Endothelial cell of umbilical vein (primary cell): ENCODE measurements at regions of chr7 and their contacts with region 1.

Region 1: DNA sequence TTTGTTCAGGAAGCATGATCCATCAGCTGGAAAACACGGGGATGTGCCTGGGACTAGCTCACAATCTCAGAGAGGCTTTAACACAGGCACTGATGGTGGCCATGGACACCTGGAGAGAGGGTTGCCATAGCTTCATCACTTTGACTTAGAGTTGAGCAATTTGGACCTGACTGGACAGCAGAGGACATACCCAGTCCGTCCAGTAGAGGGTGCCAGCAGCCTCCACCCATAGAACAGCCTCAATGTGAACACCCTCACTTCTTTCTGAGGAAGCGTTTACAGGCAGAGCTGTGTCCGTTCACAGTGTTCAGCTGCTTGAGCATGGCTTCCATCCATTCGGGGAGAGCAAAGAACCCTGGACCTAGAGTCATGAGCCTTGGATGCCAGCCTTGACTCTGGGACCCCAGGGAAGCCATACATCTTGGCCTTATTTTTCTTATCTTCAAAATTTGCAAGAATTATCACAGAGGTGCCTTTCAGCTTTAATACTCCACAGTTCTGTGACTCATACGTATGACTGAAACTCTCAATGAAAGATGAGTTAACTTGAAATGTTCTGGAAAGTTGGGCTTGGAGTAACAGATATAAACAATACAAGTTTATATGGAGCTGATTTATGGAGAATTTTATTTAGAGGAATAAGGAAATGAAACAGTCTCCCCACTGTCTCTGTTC is 302.9 kb upstream of the PODXL start:
- DNase-seq: peak; percentile 82
- H3K4me3 ChIP-seq: no peak overlapping the region
- H3K27ac ChIP-seq: no peak overlapping the region
- H3K4me1 ChIP-seq: peaks cover 17% of the 10 kb centered on the region
- H3K27me3 ChIP-seq: peaks cover 5 to 12% of the 10 kb centered on the region in 2 experiments
- CTCF ChIP-seq: peak; percentile 82 to 92
- POLR2A ChIP-seq: no peak

Region 2: GRCh38 chr7:131869169-131869844 is 10.0 kb after region 1 on chr7:
- CTCF ChIA-PET with region 1: interaction called, 15 read pairs
- POLR2A ChIA-PET with region 1: no interaction called
- dilution Hi-C with region 1: no loop called
- intact Hi-C with region 1: no loop called
- DNase-seq: no peak
- H3K4me3 ChIP-seq: no peak overlapping the region
- H3K27ac ChIP-seq: no peak overlapping the region
- H3K4me1 ChIP-seq: no peaks in the 10 kb centered on the region
- H3K27me3 ChIP-seq: peaks cover 6 to 10% of the 10 kb centered on the region in 2 experiments
- CTCF ChIP-seq: no peak
- POLR2A ChIP-seq: no peak

Region 3: DNA sequence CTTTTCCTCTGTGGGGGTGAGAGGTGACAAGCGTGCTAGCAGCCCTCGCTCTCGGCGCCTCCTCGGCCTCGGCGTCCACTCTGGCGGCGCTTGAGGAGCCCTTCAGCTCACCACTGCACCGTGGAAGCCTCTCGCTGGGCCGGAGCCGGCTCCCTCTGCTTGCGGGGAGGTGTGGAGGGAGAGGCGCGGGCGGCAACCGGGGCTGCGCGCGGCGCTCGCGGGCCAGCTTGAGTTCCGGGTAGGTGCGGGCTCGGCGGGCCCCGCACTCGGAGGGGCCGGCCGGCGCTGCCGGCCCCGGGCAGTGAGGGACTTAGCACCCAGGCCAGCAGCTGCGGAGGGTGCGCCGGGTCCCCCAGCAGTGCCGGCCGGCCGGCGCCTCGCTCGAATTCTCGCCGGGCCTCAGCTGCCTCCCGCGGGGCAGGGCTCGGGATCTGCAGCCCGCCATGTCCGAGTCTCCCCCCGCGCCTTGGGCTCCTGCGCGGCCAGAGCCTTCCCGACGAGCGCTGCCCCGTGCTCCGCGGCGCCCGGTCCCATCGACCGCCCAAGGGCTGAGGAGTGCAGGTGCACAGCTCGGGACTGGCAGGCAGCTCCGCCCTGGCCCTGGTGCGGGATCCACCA is 50.0 kb after region 1 on chr7:
- CTCF ChIA-PET with region 1: interaction called, 26 read pairs
- POLR2A ChIA-PET with region 1: no interaction called
- dilution Hi-C with region 1: no loop called
- intact Hi-C with region 1: loop called (anchors 1 kb)
- DNase-seq: no peak
- H3K4me3 ChIP-seq: no peak overlapping the region
- H3K27ac ChIP-seq: no peak overlapping the region
- H3K4me1 ChIP-seq: no peaks in the 10 kb centered on the region
- H3K27me3 ChIP-seq: peaks cover 46 to 78% of the 10 kb centered on the region in 2 experiments
- CTCF ChIP-seq: no peak
- POLR2A ChIP-seq: no peak

Region 4: DNA sequence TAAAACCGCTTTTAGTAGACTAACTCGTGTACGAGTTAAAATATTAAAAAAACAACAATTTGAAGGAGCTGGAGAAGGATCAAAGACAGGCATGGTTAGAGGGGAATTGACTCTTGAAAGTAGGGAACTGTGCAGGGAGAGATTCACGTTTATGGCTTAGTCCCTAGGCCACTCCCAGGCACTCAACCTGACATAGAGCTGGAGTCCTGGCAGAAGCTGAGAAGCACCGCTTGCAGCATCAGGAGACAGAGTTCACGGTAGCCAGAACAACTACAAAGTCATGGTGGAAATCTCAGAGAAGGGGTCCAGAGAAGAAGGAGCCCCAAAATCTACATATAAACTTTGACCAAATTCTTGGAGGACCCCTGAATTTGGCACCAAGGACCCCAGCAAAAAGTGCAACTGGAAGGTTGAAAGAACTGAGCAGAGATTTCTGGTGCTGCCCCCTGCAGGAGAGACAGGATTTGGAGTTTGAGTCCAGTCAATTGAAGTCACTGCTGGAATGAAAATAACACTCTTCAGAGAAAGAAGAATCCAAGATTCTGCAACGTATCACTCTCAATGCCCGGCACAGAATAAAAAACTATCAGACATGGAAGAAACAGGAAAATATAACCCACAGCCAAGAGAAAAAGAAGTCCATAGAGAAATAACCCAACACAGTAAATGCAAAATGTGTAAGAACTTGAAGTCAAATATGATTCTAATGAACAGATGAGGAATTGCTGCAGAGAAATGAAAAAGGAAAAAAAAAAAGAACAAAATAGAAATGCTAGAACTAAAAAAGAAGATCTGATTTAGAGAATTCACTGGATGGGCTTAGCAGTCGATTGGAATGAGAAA is 190.4 kb after region 1 on chr7:
- CTCF ChIA-PET with region 1: interaction called, 76 read pairs
- POLR2A ChIA-PET with region 1: no interaction called
- dilution Hi-C with region 1: no loop called
- intact Hi-C with region 1: loop called (anchors 1 kb)
- DNase-seq: peak; percentile 44
- H3K4me3 ChIP-seq: no peak overlapping the region
- H3K27ac ChIP-seq: no peak overlapping the region
- H3K4me1 ChIP-seq: no peaks in the 10 kb centered on the region
- H3K27me3 ChIP-seq: peaks cover 24 to 28% of the 10 kb centered on the region in 2 experiments
- CTCF ChIP-seq: peak; percentile 72 to 75
- POLR2A ChIP-seq: no peak

Region 5: GRCh38 chr7:132250883-132251653 is 391.8 kb after region 1 on chr7:
- CTCF ChIA-PET with region 1: interaction called, 8 read pairs
- POLR2A ChIA-PET with region 1: no interaction called
- dilution Hi-C with region 1: no loop called
- intact Hi-C with region 1: loop called (anchors 5 kb)
- DNase-seq: no peak
- H3K4me3 ChIP-seq: no peak overlapping the region
- H3K27ac ChIP-seq: no peak overlapping the region
- H3K4me1 ChIP-seq: peaks cover 7% of the 10 kb centered on the region
- H3K27me3 ChIP-seq: no peaks in the 10 kb centered on the region
- CTCF ChIP-seq: no peak
- POLR2A ChIP-seq: no peak

Region 6: DNA sequence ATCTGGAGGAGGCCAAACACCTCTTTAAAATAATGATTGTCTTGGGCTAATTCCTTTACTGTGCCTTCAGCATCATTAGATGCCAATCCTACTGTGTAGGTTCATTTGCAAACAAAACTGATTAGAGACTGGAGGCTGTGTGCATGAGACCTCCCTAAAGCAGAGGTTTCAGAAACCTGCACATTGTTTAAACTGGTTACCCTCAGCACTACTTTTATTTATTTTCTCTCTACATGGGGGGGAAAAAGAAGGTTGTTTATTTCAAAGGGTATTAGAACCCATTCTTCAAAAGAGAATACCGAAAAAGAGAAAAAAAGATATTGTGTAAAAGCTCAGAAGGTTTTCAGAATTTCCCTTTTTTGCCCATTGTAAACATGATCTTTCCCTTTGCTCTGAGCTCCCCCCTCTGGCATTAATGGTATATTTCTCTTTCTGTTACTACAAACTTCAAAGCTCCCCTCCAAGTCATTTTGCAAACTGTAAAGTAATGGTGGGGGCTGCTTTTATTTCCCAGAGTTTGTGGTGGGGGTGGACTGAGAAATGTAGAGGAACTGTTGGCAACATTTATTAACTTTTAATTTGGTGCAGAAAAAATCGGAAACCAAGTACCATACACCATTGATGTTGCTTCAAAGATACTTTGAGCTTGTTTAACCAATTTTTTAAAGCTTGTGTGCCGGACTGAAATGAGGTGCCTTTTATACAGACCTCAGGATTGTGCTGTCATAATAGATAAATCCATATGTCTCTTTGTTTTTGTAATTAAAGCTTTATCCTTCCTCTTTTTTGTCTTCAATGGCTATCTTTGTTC is 1575.0 kb after region 1 on chr7:
- CTCF ChIA-PET with region 1: interaction called, 16 read pairs
- POLR2A ChIA-PET with region 1: no interaction called
- dilution Hi-C with region 1: no loop called
- intact Hi-C with region 1: no loop called
- DNase-seq: peak; percentile 65
- H3K4me3 ChIP-seq: no peak overlapping the region
- H3K27ac ChIP-seq: no peak overlapping the region
- H3K4me1 ChIP-seq: peaks cover 11% of the 10 kb centered on the region
- H3K27me3 ChIP-seq: no peaks in the 10 kb centered on the region
- CTCF ChIP-seq: peak; percentile 33 to 34
- POLR2A ChIP-seq: no peak